Left colon (tissue), 2 donors: ENCODE measurements at regions of chr17 and their contacts with region 1.

Region 1: GRCh38 chr17:7561028-7561575 is 617 bp upstream of the SENP3 start:
- DNase-seq: peak; percentile 94 to 96
- ATAC-seq: peak; percentile 57

Region 2: DNA sequence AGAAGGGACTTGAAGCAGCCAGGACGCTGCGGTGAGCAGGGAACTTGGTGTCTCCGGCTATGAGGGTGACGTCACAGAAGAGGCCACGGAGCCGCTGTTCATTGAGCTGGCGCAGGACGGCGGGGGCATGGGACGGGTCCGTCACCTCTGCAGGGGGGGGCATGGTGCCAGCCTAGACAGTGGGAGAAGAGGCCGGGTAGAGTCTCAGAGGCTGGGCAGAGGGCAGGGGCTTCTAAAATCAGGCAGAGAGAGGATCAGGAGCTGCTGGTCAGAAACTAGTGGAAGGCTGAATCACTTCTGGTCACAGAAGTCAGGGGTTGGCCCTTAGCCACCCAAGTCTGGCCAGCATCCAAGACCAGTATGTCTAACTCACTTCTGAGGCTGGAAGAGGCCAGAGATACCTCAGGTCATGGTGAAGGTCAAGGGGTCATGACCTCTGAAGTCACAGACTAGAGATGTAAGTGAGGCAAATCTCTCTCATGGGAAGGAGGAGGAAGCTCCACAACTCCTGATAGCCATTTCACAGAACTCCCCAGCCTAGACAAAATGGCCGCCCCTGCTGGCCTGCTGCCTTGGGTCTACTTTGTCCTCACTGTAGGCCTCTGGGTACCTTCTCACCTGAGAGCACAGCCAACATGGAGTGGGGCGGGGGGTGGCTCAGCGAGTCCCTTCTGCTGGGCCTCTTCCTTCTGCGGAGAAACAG is 94.3 kb before region 1 on chr17:
- intact Hi-C with region 1: no loop called
- DNase-seq: no peak
- ATAC-seq: no peak

Region 3: DNA sequence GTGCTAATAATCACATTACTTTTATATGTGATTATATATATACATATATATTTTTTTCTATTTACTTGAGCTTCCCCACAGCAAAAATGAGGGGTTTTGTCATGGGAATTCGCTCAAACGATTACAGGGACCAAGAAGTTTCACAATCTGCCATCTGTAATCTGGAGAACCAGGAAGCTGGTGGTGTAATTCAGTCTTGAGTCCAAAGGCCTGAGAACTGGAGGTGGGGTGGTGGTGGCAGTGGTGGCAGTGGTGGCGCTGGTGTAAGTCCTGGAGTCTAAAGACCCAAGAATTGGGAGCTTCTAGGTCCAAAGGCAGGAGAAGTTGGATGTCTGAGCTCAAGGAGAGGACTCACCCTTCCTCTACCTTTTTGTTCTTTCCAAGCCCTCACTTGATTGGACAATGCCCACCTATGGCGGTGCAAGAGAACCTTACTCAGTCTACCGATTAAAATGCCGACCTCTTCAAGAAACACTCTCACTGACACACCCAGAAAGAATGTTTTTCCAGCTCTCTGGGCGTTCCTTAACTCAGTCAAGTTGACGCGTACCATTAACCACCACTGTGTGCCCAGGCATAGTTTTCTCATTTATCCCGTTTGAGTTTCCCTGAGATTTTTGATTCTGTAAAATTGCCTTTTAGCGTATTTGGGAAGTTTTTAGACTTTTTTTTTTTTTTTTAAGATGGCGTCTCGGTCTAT is 45.0 kb before region 1 on chr17:
- intact Hi-C with region 1: loop called in 1 of 2 experiments (anchors 2 kb)
- DNase-seq: peak; percentile 67 to 71
- ATAC-seq: peak; percentile 93